ENCODE measurements at regions of chr12 and their contacts with region 1.

Region 1: DNA sequence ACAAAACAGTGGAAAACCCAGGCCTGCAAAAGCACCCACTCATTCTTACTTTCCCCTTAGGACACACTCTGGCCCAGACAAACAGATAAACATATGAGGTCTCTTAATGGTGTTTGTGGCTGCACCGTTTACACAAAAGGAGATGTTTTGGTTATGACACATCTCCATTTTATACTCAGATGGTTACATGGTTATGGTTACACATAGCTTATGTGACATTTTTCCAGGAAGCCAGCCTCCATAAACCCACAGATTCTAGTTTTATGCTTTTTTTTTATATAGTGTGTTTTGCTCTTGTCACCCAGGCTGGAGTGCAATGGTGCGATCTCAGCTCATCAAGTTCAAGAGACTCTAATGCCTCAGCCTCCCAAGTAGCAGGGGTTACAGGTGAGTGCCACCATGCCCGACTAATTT is 3.5 kb upstream of the KLRD1 start:
- DNase-seq: peak; percentile 37 to 67
- ATAC-seq: peak; percentile 50 to 77 (median 69)
- H3K4me3 ChIP-seq: peak overlapping the region; percentile 87
- H3K4me3 Mint-ChIP-seq: peak overlapping the region; percentile 95
- H3K27ac ChIP-seq: peak overlapping the region; percentile 84
- H3K27ac Mint-ChIP-seq: peak overlapping the region; percentile 97 to 100
- H3K4me1 ChIP-seq: peaks cover 30% of the 10 kb centered on the region
- H3K4me1 Mint-ChIP-seq: peaks cover 86 to 96% of the 10 kb centered on the region in 2 donors
- H3K27me3 ChIP-seq: no peaks in the 10 kb centered on the region
- H3K27me3 Mint-ChIP-seq: no peaks in the 10 kb centered on the region
- CTCF ChIP-seq: no peak

Region 2: GRCh38 chr12:9773216-9773877 is 530.8 kb before region 1 on chr12:
- intact Hi-C with region 1: no loop called
- DNase-seq: peak in 1 of 2 donors; percentile 51
- ATAC-seq: peak in 1 of 3 donors; percentile 34
- H3K4me3 ChIP-seq: no peak overlapping the region
- H3K4me3 Mint-ChIP-seq: no peak overlapping the region
- H3K27ac ChIP-seq: no peak overlapping the region
- H3K27ac Mint-ChIP-seq: peak overlapping the region; percentile 10
- H3K4me1 ChIP-seq: peaks cover 8% of the 10 kb centered on the region
- H3K4me1 Mint-ChIP-seq: peaks cover 28 to 45% of the 10 kb centered on the region in 2 donors
- H3K27me3 ChIP-seq: no peaks in the 10 kb centered on the region
- H3K27me3 Mint-ChIP-seq: no peaks in the 10 kb centered on the region
- CTCF ChIP-seq: no peak

Region 3: DNA sequence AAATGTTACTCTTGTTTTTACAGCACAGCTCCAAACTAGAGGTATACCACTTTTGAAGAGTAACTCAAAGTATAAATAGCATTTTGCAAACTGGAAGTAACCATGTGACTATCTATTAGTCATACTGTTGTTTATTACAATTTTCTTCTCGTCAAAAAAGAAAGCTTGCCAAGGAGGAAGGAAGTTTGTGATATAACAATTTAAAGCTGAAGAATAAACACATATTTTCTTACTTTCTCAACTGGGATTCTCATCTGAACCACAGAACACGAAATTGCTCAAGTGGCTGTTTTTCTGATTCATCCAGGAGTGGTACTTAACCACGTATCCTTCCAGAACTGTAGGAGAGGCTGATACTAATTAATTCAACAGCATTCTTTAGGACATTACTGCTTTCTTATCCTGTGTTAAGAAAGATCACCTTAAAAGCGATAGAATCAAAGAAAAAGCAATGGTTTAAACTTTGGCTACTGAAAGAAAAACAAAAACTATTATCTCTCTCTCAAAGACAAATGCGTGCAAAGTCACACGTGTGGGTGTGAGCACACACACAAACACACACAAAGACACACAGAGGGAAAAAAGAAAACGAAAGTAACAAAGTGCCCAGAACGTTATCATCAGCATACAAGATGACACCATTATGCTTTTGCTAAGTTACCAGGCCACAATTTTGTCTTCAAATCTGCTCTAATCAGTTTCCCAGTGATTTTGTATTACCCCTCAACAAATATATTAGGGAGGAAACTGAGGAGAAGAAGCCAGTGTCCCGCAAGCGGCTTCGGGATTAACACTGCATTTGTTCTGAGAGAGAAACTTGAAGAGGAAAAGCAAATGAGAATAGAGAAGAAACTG is 434.6 kb before region 1 on chr12 and contains the start of gene CLEC2B:
- intact Hi-C with region 1: loop called (anchors 10 kb)
- DNase-seq: peak in 1 of 2 donors; percentile 80
- ATAC-seq: peak; percentile 74 to 86 (median 74)
- H3K4me3 ChIP-seq: peak within 1 kb of the TSS; percentile 99
- H3K4me3 Mint-ChIP-seq: peak within 1 kb of the TSS; percentile 98
- H3K27ac ChIP-seq: peak within 1 kb of the TSS; percentile 99
- H3K27ac Mint-ChIP-seq: peak within 1 kb of the TSS; percentile 98 to 100
- H3K4me1 ChIP-seq: peaks cover 9% of the 10 kb centered on the region
- H3K4me1 Mint-ChIP-seq: peaks cover 38 to 43% of the 10 kb centered on the region in 2 donors
- H3K27me3 ChIP-seq: no peaks in the 10 kb centered on the region
- H3K27me3 Mint-ChIP-seq: no peaks in the 10 kb centered on the region
- CTCF ChIP-seq: no peak
- total RNA-seq, gene CLEC2B: 158 to 302 (median 220) TPM

Region 4: GRCh38 chr12:10249690-10250455 is 54.3 kb before region 1 on chr12:
- intact Hi-C with region 1: loop called (anchors 1 kb)
- DNase-seq: peak; percentile 50 to 63
- ATAC-seq: peak; percentile 92 to 97 (median 96)
- H3K4me3 ChIP-seq: peak overlapping the region; percentile 5
- H3K4me3 Mint-ChIP-seq: peak overlapping the region; percentile 91
- H3K27ac ChIP-seq: peak overlapping the region; percentile 73
- H3K27ac Mint-ChIP-seq: peak overlapping the region; percentile 95 to 96
- H3K4me1 ChIP-seq: peaks cover 47% of the 10 kb centered on the region
- H3K4me1 Mint-ChIP-seq: peaks cover 58 to 66% of the 10 kb centered on the region in 2 donors
- H3K27me3 ChIP-seq: no peaks in the 10 kb centered on the region
- H3K27me3 Mint-ChIP-seq: no peaks in the 10 kb centered on the region
- CTCF ChIP-seq: no peak

Region 5: GRCh38 chr12:10364815-10365622 is 60.9 kb after region 1 on chr12:
- intact Hi-C with region 1: loop called (anchors 5 kb)
- DNase-seq: peak; percentile 51 to 90
- ATAC-seq: peak; percentile 74 to 83 (median 80)
- H3K4me3 ChIP-seq: peak overlapping the region; percentile 70
- H3K4me3 Mint-ChIP-seq: no peak overlapping the region
- H3K27ac ChIP-seq: peak overlapping the region; percentile 83
- H3K27ac Mint-ChIP-seq: no peak overlapping the region
- H3K4me1 ChIP-seq: peaks cover 63% of the 10 kb centered on the region
- H3K4me1 Mint-ChIP-seq: peaks cover 23 to 40% of the 10 kb centered on the region in 2 donors
- H3K27me3 ChIP-seq: no peaks in the 10 kb centered on the region
- H3K27me3 Mint-ChIP-seq: no peaks in the 10 kb centered on the region
- CTCF ChIP-seq: no peak

Region 6: DNA sequence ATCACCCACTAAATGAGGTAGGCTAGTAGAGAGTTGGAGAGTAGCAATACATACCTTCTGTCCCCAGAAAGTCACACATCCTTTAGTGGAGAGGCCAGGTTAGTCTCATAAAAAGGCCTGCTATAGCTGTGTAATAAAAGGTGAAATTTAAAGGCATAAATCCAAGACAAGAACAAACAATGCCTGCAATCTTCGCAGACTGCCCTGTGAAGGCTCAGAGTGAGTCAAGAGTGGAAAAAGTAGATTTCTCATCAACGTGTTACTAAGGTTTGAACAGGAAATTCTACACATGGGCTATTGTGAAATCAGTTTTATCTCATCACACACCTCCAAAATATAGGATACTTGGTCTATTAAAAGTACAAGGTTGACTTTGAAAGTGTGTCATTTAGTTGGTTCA is 149.0 kb after region 1 on chr12 and contains the start of gene KLRC1:
- intact Hi-C with region 1: loop called (anchors 5 kb)
- DNase-seq: peak in 1 of 2 donors; percentile 26
- ATAC-seq: peak; percentile 59 to 75 (median 75)
- H3K4me3 ChIP-seq: peak within 1 kb of the TSS; percentile 55
- H3K4me3 Mint-ChIP-seq: peak within 1 kb of the TSS; percentile 67
- H3K27ac ChIP-seq: peak within 1 kb of the TSS; percentile 39
- H3K27ac Mint-ChIP-seq: peak within 1 kb of the TSS; percentile 52 to 90
- H3K4me1 ChIP-seq: peaks cover 18% of the 10 kb centered on the region
- H3K4me1 Mint-ChIP-seq: peaks cover 16 to 45% of the 10 kb centered on the region in 2 donors
- H3K27me3 ChIP-seq: no peaks in the 10 kb centered on the region
- H3K27me3 Mint-ChIP-seq: no peaks in the 10 kb centered on the region
- CTCF ChIP-seq: no peak
- total RNA-seq, gene KLRC1: 30.0 to 180 (median 83.1) TPM

Measured in natural killer cell (primary cell).